Right cardiac atrium (tissue), 5 donors: ENCODE measurements at regions of chr7 and their contacts with region 1.

Region 1: DNA sequence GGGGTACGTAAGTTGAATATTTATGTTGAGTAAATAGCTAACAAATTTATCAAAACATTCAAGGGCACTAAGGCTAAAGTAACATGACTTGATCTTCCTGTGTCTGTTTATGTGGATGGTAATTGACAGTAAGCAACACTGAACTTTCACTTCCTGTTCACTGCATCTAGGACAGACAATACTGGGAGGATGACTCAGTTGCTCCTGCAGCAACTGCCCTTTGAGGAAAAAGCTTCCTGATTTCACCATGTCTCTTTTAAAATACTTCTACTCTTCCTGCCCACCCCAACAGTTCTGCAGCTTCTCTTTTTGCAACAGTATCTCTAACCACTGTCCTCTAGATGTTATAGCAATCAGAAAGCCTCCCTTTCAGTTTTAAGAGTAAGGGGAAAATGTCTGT is 76.6 kb upstream of the HGF start:
- DNase-seq: no peak
- ATAC-seq: peak; percentile 62 to 69
- H3K4me3 ChIP-seq: peak overlapping the region; percentile 45
- H3K27ac ChIP-seq: no peak overlapping the region
- H3K4me1 ChIP-seq: no peaks in the 10 kb centered on the region
- H3K27me3 ChIP-seq: no peaks in the 10 kb centered on the region

Region 2: GRCh38 chr7:81736088-81736487 is 110.3 kb before region 1 on chr7:
- intact Hi-C with region 1: no loop called
- DNase-seq: no peak
- ATAC-seq: no peak
- H3K4me3 ChIP-seq: no peak overlapping the region
- H3K27ac ChIP-seq: no peak overlapping the region
- H3K4me1 ChIP-seq: no peaks in the 10 kb centered on the region
- H3K27me3 ChIP-seq: no peaks in the 10 kb centered on the region

Region 3: DNA sequence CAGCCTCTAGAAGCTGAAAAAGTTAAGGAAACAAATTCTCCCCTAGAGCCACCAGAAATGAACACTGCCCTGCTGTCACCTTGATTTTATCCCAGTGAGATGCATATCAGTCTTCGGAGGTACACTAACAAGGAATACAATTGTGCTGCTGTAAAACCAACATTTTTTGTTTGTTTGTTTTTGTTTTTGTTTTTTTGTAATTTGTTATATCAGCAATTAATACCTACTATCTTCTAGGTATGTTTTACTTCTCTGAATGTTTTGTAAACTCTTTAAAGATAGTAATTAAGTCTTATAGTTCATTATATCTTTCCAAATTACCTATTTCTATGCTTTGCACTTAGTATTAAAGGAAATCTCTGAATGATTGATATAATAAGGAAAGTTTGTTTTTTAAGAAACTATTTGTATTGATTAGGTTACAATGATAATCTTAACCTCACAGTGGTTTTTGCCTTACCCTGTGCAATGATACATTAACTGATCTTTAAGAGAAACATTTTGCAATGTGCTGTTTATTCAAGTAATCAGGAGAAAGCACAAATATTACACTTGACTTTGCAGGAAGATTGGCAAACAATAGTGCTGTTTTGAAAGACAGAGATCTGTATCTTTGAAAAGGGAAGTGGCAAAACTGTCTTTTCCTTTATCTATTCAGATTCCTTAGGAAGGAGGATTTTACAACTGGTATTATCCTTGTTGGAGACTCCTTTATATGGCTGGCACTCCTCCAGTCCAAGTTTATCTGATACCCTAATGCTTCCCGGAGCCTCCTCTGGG is 65.3 kb before region 1 on chr7:
- intact Hi-C with region 1: loop called in 1 of 4 experiments (anchors 10 kb)
- DNase-seq: no peak
- ATAC-seq: no peak
- H3K4me3 ChIP-seq: no peak overlapping the region
- H3K27ac ChIP-seq: no peak overlapping the region
- H3K4me1 ChIP-seq: no peaks in the 10 kb centered on the region
- H3K27me3 ChIP-seq: no peaks in the 10 kb centered on the region